ENCODE measurements at regions of chr1 and their contacts with region 1.

Region 1: GRCh38 chr1:235079443-235080296 is 49.0 kb downstream of the TOMM20 start:
- DNase-seq: peak; percentile 91
- H3K4me3 ChIP-seq: no peak overlapping the region
- H3K27ac ChIP-seq: peak overlapping the region; percentile 83
- H3K4me1 ChIP-seq: peaks cover 22% of the 10 kb centered on the region
- H3K27me3 ChIP-seq: no peaks in the 10 kb centered on the region
- CTCF ChIP-seq: no peak

Region 2: DNA sequence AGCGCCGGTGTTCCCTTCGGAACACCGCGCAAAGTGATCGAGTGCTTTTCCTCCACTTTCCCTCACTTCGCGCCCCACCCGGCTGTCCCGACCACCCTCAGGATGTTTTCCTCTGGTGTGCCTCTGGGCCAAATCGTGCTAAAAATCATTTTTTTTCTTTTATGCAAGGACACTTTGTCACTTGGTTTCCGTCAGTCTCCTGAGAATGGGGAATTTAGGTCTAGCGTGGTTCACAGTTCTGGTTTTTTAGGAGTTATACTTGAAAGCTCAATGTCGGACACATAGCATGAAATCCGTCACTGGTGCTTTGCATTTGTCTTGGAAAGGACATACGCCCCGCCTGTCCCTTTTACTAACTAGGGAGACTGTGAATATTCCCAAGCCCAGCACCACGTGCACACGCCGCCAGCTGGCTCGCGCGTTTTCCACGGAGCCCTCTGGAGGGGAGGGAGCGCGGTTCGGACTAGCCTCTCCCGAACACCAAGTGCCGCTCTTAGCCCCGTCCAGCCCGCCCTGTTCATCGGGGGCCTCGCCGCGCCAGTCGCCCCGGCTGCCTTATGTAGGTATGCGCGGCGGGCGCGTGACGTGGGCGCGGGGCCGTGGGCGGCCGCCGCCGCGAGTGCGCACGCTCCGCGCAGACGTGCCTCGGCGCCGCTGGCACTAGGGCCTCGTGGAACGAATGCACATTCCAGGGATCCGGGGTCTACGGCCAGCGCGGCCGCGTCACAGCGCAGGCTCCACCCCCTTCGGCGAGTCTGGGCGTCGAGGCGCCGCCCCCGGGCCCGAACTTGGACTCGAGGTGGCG is 469.1 kb before region 1 on chr1:
- intact Hi-C with region 1: loop called (anchors 5 kb)
- DNase-seq: peak; percentile 95
- H3K4me3 ChIP-seq: peak overlapping the region; percentile 44
- H3K27ac ChIP-seq: peak overlapping the region; percentile 100
- H3K4me1 ChIP-seq: peaks cover 13% of the 10 kb centered on the region
- H3K27me3 ChIP-seq: no peaks in the 10 kb centered on the region
- CTCF ChIP-seq: no peak

Region 3: GRCh38 chr1:234722904-234723720 is 356.6 kb before region 1 on chr1:
- intact Hi-C with region 1: loop called (anchors 10 kb)
- DNase-seq: peak; percentile 65
- H3K4me3 ChIP-seq: no peak overlapping the region
- H3K27ac ChIP-seq: peak overlapping the region; percentile 99
- H3K4me1 ChIP-seq: peaks cover 44% of the 10 kb centered on the region
- H3K27me3 ChIP-seq: no peaks in the 10 kb centered on the region
- CTCF ChIP-seq: no peak

Region 4: GRCh38 chr1:234963180-234963903 is 116.3 kb before region 1 on chr1:
- intact Hi-C with region 1: loop called (anchors 5 kb)
- DNase-seq: peak; percentile 91
- H3K4me3 ChIP-seq: no peak overlapping the region
- H3K27ac ChIP-seq: peak overlapping the region; percentile 98
- H3K4me1 ChIP-seq: peaks cover 36% of the 10 kb centered on the region
- H3K27me3 ChIP-seq: no peaks in the 10 kb centered on the region
- CTCF ChIP-seq: no peak

Region 5: DNA sequence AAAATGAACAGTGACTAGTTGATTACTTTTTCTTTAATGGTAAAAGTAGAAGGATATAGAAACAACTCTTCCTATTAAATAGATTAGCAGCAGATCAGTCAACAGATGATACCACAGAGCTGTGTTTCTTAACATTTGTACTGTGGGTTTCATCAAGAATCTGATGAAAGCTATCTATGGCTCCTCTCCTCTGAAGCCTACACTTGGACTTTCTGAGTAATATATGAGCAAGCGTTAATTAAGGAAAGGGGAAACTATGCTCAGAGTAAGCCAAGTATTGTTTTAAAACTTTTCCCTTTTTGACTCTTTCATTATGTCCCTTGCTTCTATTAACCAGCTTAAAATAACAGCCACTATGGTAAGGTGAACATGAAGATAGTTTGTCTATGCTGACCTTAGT is 237.5 kb after region 1 on chr1:
- intact Hi-C with region 1: no loop called
- DNase-seq: no peak
- H3K4me3 ChIP-seq: no peak overlapping the region
- H3K27ac ChIP-seq: no peak overlapping the region
- H3K4me1 ChIP-seq: no peaks in the 10 kb centered on the region
- H3K27me3 ChIP-seq: no peaks in the 10 kb centered on the region
- CTCF ChIP-seq: no peak

Measured in colonic mucosa (tissue), 4 donors.